Keratinocyte (primary cell): ENCODE measurements at regions of chr10 and their contacts with region 1.

Region 1: GRCh38 chr10:60549686-60550085 is 160.0 kb upstream of the ANK3 start:
- DNase-seq: no peak
- H3K4me3 ChIP-seq: no peak overlapping the region
- H3K27ac ChIP-seq: no peak overlapping the region
- H3K4me1 ChIP-seq: no peaks in the 10 kb centered on the region
- H3K27me3 ChIP-seq: no peaks in the 10 kb centered on the region
- CTCF ChIP-seq: peak in 2 of 3 experiments; percentile 44 to 46

Region 2: GRCh38 chr10:60267802-60268201 is 281.9 kb before region 1 on chr10:
- dilution Hi-C with region 1: no loop called
- DNase-seq: no peak
- H3K4me3 ChIP-seq: no peak overlapping the region
- H3K27ac ChIP-seq: no peak overlapping the region
- H3K4me1 ChIP-seq: no peaks in the 10 kb centered on the region
- H3K27me3 ChIP-seq: no peaks in the 10 kb centered on the region
- CTCF ChIP-seq: no peak

Region 3: GRCh38 chr10:60454336-60454735 is 95.3 kb before region 1 on chr10:
- dilution Hi-C with region 1: loop called (anchors 5 kb)
- DNase-seq: no peak
- H3K4me3 ChIP-seq: no peak overlapping the region
- H3K27ac ChIP-seq: no peak overlapping the region
- H3K4me1 ChIP-seq: no peaks in the 10 kb centered on the region
- H3K27me3 ChIP-seq: no peaks in the 10 kb centered on the region
- CTCF ChIP-seq: no peak

Region 4: GRCh38 chr10:60495338-60496055 is 54.2 kb before region 1 on chr10:
- dilution Hi-C with region 1: loop called (anchors 10 kb)
- DNase-seq: no peak
- H3K4me3 ChIP-seq: no peak overlapping the region
- H3K27ac ChIP-seq: no peak overlapping the region
- H3K4me1 ChIP-seq: peaks cover 3% of the 10 kb centered on the region
- H3K27me3 ChIP-seq: no peaks in the 10 kb centered on the region
- CTCF ChIP-seq: no peak